B cell (primary cell): ENCODE measurements at regions of chr1 and their contacts with region 1.

Region 1: GRCh38 chr1:48870596-48870995 is 93.9 kb upstream of the BEND5 start:
- DNase-seq: peak; percentile 52
- ATAC-seq: no peak
- H3K4me3 ChIP-seq: no peak overlapping the region
- H3K4me3 Mint-ChIP-seq: no peak overlapping the region
- H3K27ac ChIP-seq: no peak overlapping the region
- H3K27ac Mint-ChIP-seq: no peak overlapping the region
- H3K4me1 ChIP-seq: no peaks in the 10 kb centered on the region
- H3K4me1 Mint-ChIP-seq: peaks cover 4% of the 10 kb centered on the region
- H3K27me3 ChIP-seq: no peaks in the 10 kb centered on the region
- H3K27me3 Mint-ChIP-seq: peaks cover 4% of the 10 kb centered on the region
- CTCF ChIP-seq: peak; percentile 77

Region 2: GRCh38 chr1:48572646-48573261 is 297.8 kb before region 1 on chr1:
- CTCF ChIA-PET with region 1: no interaction called
- POLR2A ChIA-PET with region 1: no interaction called
- intact Hi-C with region 1: loop called (anchors 2 kb)
- DNase-seq: peak; percentile 32
- ATAC-seq: no peak
- H3K4me3 ChIP-seq: no peak overlapping the region
- H3K4me3 Mint-ChIP-seq: no peak overlapping the region
- H3K27ac ChIP-seq: no peak overlapping the region
- H3K27ac Mint-ChIP-seq: no peak overlapping the region
- H3K4me1 ChIP-seq: no peaks in the 10 kb centered on the region
- H3K4me1 Mint-ChIP-seq: no peaks in the 10 kb centered on the region
- H3K27me3 ChIP-seq: no peaks in the 10 kb centered on the region
- H3K27me3 Mint-ChIP-seq: peaks cover 5% of the 10 kb centered on the region
- CTCF ChIP-seq: peak; percentile 35

Region 3: DNA sequence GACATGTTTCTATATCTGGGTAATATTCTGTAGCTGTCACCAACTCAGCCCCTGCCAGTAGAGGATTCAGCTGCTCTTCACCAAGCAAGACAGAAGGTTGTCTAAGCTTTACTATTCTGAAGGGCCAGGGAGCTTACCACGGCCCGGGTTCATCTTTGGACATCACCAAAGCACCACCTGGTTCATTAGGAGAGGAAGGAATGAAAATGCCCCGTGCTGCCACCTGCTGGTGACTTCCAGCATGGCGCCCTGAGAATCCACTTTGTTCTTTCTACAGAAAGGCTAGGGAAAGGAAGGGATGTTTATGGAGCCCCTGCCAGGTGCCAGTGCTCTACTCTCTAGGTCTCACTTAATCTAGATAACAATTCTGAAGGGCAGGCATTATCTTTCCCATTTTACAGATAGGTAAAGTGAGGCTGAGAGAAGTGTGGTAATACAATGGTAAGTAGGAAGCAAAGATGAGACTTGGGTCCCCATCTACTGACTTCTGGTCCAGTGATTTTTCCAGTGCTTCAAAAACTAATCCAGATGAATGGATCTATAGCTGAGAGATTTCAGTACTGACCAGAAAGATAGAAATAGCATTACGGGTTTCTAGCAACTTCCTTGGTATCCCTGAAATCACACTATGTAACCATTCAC is 173.4 kb before region 1 on chr1:
- CTCF ChIA-PET with region 1: no interaction called
- POLR2A ChIA-PET with region 1: no interaction called
- intact Hi-C with region 1: no loop called
- DNase-seq: peak; percentile 58
- ATAC-seq: no peak
- H3K4me3 ChIP-seq: no peak overlapping the region
- H3K4me3 Mint-ChIP-seq: no peak overlapping the region
- H3K27ac ChIP-seq: no peak overlapping the region
- H3K27ac Mint-ChIP-seq: no peak overlapping the region
- H3K4me1 ChIP-seq: no peaks in the 10 kb centered on the region
- H3K4me1 Mint-ChIP-seq: no peaks in the 10 kb centered on the region
- H3K27me3 ChIP-seq: peaks cover 0 to 6% (median 0%) of the 10 kb centered on the region in 4 experiments
- H3K27me3 Mint-ChIP-seq: peaks cover 9% of the 10 kb centered on the region
- CTCF ChIP-seq: peak; percentile 97

Region 4: DNA sequence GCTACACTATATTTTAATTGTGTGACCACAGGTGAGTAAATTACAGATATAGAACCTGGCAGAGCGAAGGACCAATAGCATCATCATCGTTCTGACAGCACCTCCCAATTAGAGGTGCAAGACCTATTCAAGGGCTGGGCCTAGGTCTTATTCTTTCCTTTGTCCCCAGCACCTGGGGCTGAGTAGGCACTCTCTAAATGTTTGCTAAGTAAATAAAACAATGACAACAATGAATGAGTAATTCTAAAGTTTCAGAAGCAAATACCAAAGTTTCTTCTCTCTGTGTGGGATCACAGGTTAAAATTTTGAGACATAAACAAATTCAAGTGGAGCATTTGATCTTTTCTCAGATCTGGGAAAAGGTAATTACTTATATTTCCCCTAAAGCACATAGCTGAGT is 126.5 kb before region 1 on chr1:
- CTCF ChIA-PET with region 1: interaction called, 11 read pairs
- POLR2A ChIA-PET with region 1: no interaction called
- intact Hi-C with region 1: no loop called
- DNase-seq: no peak
- ATAC-seq: no peak
- H3K4me3 ChIP-seq: no peak overlapping the region
- H3K4me3 Mint-ChIP-seq: no peak overlapping the region
- H3K27ac ChIP-seq: no peak overlapping the region
- H3K27ac Mint-ChIP-seq: no peak overlapping the region
- H3K4me1 ChIP-seq: no peaks in the 10 kb centered on the region
- H3K4me1 Mint-ChIP-seq: peaks cover 13% of the 10 kb centered on the region
- H3K27me3 ChIP-seq: no peaks in the 10 kb centered on the region
- H3K27me3 Mint-ChIP-seq: no peaks in the 10 kb centered on the region
- CTCF ChIP-seq: no peak

Region 5: GRCh38 chr1:48750109-48750508 is 120.5 kb before region 1 on chr1:
- CTCF ChIA-PET with region 1: interaction called, 11 read pairs
- POLR2A ChIA-PET with region 1: no interaction called
- intact Hi-C with region 1: loop called (anchors 1 kb)
- DNase-seq: peak; percentile 86
- ATAC-seq: peak; percentile 100
- H3K4me3 ChIP-seq: no peak overlapping the region
- H3K4me3 Mint-ChIP-seq: peak overlapping the region; percentile 7
- H3K27ac ChIP-seq: peak overlapping the region; percentile 36 to 74
- H3K27ac Mint-ChIP-seq: peak overlapping the region; percentile 83
- H3K4me1 ChIP-seq: peaks cover 38 to 41% of the 10 kb centered on the region in 2 donors
- H3K4me1 Mint-ChIP-seq: peaks cover 52% of the 10 kb centered on the region
- H3K27me3 ChIP-seq: no peaks in the 10 kb centered on the region
- H3K27me3 Mint-ChIP-seq: no peaks in the 10 kb centered on the region
- CTCF ChIP-seq: peak; percentile 83